SK-N-SH (cell line): ENCODE measurements at regions of chr4 and their contacts with region 1.

Region 1: GRCh38 chr4:78059524-78059889 is 2.4 kb downstream of the FRAS1 start:
- DNase-seq: peak; percentile 70
- H3K4me3 ChIP-seq: peak overlapping the region; percentile 67 to 91
- H3K27ac ChIP-seq: peak overlapping the region; percentile 57 to 60
- H3K4me1 ChIP-seq: peaks cover 0 to 8% of the 10 kb centered on the region in 2 experiments; a peak in 1 of 4 replicates
- H3K27me3 ChIP-seq: no peaks in the 10 kb centered on the region
- CTCF ChIP-seq: peak; percentile 84
- EP300 ChIP-seq: no peak
- RAD21 ChIP-seq: peak; percentile 79

Region 2: DNA sequence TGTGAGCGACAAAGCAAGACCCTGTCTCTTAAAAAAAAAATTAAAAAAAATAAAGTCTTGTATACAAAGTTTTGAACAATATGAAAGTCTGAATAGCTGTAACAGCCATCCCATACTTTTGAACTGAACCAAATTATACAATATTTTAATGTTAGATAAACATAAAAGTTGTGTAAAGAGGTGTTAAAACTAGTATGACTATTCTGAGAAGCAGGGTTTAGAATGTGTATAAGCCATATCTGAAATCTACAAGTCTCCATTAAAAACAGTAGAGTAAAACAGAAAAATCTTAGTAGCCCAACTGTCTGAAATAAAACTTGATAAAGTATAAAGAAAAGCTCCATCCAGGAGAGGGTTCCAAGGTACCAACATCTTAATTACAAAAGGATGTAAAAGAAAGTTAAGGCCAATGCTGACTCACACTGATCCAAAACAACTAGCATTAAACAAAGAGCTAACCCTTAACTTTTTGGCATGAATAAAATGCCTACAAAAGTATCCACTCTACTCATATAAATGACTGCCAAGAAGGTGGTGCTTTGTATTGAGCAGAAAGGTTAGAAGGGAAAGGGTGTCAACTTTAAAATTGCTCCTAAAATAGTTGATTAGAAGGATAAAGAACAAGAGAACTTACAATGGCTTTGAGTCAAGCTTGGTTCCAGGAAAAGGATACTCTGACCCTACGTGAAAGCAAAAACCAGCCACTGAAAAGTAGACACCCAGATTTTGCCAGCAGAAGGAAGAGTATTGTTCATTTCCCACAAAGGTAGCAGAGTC is 258.8 kb before region 1 on chr4:
- CTCF ChIA-PET with region 1: no interaction called
- POLR2A ChIA-PET with region 1: no interaction called
- DNase-seq: no peak
- H3K4me3 ChIP-seq: no peak overlapping the region
- H3K27ac ChIP-seq: no peak overlapping the region
- H3K4me1 ChIP-seq: peaks cover 0 to 8% of the 10 kb centered on the region in 2 experiments; a peak in 1 of 4 replicates
- H3K27me3 ChIP-seq: no peaks in the 10 kb centered on the region
- CTCF ChIP-seq: no peak
- EP300 ChIP-seq: no peak
- RAD21 ChIP-seq: no peak

Region 3: GRCh38 chr4:77959566-77960338 is 99.8 kb before region 1 on chr4:
- CTCF ChIA-PET with region 1: interaction called, 19 read pairs
- POLR2A ChIA-PET with region 1: interaction called, 3 read pairs
- DNase-seq: peak; percentile 37
- H3K4me3 ChIP-seq: no peak overlapping the region; a peak in 1 of 4 replicates
- H3K27ac ChIP-seq: no peak overlapping the region
- H3K4me1 ChIP-seq: no peaks in the 10 kb centered on the region
- H3K27me3 ChIP-seq: no peaks in the 10 kb centered on the region
- CTCF ChIP-seq: peak; percentile 88
- EP300 ChIP-seq: no peak
- RAD21 ChIP-seq: peak; percentile 90

Region 4: GRCh38 chr4:78047366-78047765 is 12.1 kb before region 1 on chr4:
- CTCF ChIA-PET with region 1: interaction called, 14 read pairs
- POLR2A ChIA-PET with region 1: interaction called, 3 read pairs
- DNase-seq: no peak
- H3K4me3 ChIP-seq: no peak overlapping the region
- H3K27ac ChIP-seq: no peak overlapping the region
- H3K4me1 ChIP-seq: no peaks in the 10 kb centered on the region
- H3K27me3 ChIP-seq: no peaks in the 10 kb centered on the region
- CTCF ChIP-seq: no peak
- EP300 ChIP-seq: no peak
- RAD21 ChIP-seq: no peak

Region 5: GRCh38 chr4:78079726-78080430 is 20.4 kb after region 1 on chr4:
- CTCF ChIA-PET with region 1: interaction called, 16 read pairs
- POLR2A ChIA-PET with region 1: no interaction called
- DNase-seq: no peak
- H3K4me3 ChIP-seq: no peak overlapping the region
- H3K27ac ChIP-seq: no peak overlapping the region
- H3K4me1 ChIP-seq: no peaks in the 10 kb centered on the region; a peak in 1 of 4 replicates
- H3K27me3 ChIP-seq: no peaks in the 10 kb centered on the region
- CTCF ChIP-seq: no peak
- EP300 ChIP-seq: no peak
- RAD21 ChIP-seq: no peak

Region 6: DNA sequence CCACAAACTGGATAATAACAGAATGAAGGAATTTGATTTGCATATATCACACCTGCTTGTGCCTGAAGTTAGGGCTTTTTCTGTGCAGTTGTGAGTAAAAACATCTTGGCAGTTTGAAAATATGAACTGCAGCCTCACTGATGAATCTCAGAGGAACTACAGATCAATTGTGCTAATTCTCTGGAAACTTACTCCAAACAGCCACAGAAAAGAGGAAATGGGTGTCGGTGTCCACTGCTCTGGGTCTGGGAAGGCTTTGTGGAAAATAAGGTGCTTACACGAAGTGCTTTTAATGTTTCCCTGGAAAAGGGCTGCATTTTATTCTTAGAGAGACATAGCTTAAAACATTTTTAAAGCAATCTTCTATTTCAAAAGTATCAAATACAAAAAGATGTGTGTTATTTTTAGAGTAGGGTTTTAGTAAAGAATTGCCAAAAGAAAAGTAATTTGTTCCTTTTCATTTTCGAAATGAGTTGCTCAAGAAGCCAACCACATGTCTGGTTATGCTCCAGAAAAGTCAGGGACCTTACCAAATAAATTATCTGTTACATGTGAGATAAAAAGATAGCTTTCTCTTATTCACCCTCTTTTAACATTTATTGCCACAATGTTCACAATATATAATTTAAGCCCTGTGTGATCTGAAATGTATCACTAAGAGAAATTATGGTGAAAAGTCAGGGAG is 237.8 kb after region 1 on chr4:
- CTCF ChIA-PET with region 1: interaction called, 15 read pairs
- POLR2A ChIA-PET with region 1: no interaction called
- DNase-seq: no peak
- H3K4me3 ChIP-seq: no peak overlapping the region; a peak in 1 of 4 replicates
- H3K27ac ChIP-seq: peak overlapping the region; percentile 63 to 92; a peak in 3 of 4 replicates
- H3K4me1 ChIP-seq: peaks cover 14 to 41% of the 10 kb centered on the region in 2 experiments
- H3K27me3 ChIP-seq: no peaks in the 10 kb centered on the region
- CTCF ChIP-seq: no peak
- EP300 ChIP-seq: peak; percentile 19 to 67; a peak in 3 of 4 replicates
- RAD21 ChIP-seq: no peak